ENCODE measurements at regions of chr11 and their contacts with region 1.

Region 1: DNA sequence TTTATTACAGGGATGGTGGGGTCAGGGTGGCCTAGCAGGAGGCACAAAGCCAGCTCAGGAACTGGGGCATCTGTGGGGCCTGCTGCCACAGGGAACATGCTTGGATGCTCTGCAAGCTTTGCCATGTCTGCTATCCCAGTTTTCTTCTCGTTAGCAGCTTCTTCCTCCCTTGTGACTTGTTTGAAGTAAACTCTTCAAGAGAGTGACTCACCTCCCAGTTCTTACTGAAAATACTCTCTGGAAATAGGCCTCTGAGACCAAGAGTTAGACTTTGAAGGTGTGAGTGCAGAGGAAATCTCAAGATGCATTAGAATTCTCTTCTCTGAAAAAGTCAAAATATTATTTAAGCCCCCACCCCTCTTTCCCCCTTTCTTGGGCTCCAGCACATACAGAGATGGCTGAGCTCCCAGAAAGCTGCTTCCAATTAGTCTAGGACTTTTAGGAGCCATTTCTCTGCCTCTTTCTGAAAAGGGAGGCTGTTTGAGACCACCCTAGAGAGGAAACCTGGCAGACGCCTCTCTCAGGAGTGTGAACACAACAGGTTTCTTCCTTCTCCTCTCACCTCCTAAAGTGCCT is 15.1 kb downstream of the CWC15 start:
- DNase-seq: no peak
- H3K4me3 ChIP-seq: no peak overlapping the region
- H3K27ac ChIP-seq: no peak overlapping the region
- H3K4me1 ChIP-seq: no peaks in the 10 kb centered on the region
- H3K27me3 ChIP-seq: no peaks in the 10 kb centered on the region
- CTCF ChIP-seq: no peak
- EP300 ChIP-seq: no peak
- POLR2A ChIP-seq: no peak
- RAD21 ChIP-seq: no peak

Region 2: GRCh38 chr11:94809251-94809650 is 149.0 kb before region 1 on chr11:
- CTCF ChIA-PET with region 1: no interaction called
- POLR2A ChIA-PET with region 1: no interaction called
- DNase-seq: no peak
- H3K4me3 ChIP-seq: no peak overlapping the region
- H3K27ac ChIP-seq: no peak overlapping the region
- H3K4me1 ChIP-seq: peaks cover 0 to 5% (median under 1%) of the 10 kb centered on the region in 4 experiments; a peak in 2 of 7 replicates
- H3K27me3 ChIP-seq: no peaks in the 10 kb centered on the region
- CTCF ChIP-seq: no peak
- EP300 ChIP-seq: no peak
- POLR2A ChIP-seq: no peak
- RAD21 ChIP-seq: no peak

Region 3: DNA sequence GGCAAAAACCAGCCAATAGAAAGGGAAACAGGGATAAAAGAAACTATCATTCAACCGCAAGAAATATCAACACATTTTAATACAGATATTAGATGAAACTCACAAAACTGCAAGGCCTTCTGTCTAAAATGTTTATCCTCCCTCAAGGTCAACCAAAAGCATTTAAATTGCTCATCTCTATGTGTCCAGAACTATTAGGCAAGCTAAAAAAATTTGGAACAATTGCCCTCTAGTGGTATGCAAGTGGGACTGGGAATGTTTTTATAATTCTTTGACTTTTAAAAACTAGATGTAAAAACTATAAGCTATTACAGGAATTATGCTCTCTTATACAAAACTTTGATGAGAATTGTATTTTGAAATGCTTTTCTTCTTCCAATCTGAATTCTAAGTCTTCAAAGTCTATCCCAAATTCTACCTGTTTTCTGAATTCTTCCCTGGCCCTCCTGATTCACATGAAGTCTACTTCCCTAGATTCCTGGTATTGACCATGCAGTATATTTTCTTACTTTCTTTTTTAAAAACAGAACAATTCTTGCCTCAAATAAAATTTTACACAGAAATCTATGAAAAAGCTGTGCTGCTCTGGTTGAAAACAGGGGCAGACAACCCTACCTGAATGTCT is 10.2 kb after region 1 on chr11:
- CTCF ChIA-PET with region 1: interaction called, 13 read pairs
- POLR2A ChIA-PET with region 1: interaction called, 6 read pairs
- DNase-seq: no peak
- H3K4me3 ChIP-seq: no peak overlapping the region
- H3K27ac ChIP-seq: no peak overlapping the region
- H3K4me1 ChIP-seq: peaks cover 0 to 2% (median 0%) of the 10 kb centered on the region in 4 experiments; a peak in 2 of 7 replicates
- H3K27me3 ChIP-seq: no peaks in the 10 kb centered on the region
- CTCF ChIP-seq: peak in 1 of 3 experiments; percentile 21; a peak in 2 of 4 replicates
- EP300 ChIP-seq: no peak
- POLR2A ChIP-seq: no peak
- RAD21 ChIP-seq: 0 out of 4 replicates have a peak, but pooled peaks have one; percentile 9 to 12

Region 4: GRCh38 chr11:94997437-94997836 is 39.2 kb after region 1 on chr11:
- CTCF ChIA-PET with region 1: no interaction called
- POLR2A ChIA-PET with region 1: no interaction called
- DNase-seq: no peak
- H3K4me3 ChIP-seq: no peak overlapping the region
- H3K27ac ChIP-seq: no peak overlapping the region
- H3K4me1 ChIP-seq: no peaks in the 10 kb centered on the region
- H3K27me3 ChIP-seq: no peaks in the 10 kb centered on the region
- CTCF ChIP-seq: no peak
- EP300 ChIP-seq: no peak
- POLR2A ChIP-seq: no peak
- RAD21 ChIP-seq: no peak; a peak in 1 of 4 replicates

Measured in H1 (cell line).